RWPE1 (cell line): ENCODE measurements at regions of chr16 and their contacts with region 1.

Region 1: GRCh38 chr16:57648590-57649442 is 19.3 kb upstream of the ADGRG3 start:
- DNase-seq: peak; percentile 84
- H3K27ac ChIP-seq: peak overlapping the region; percentile 70
- CTCF ChIP-seq: peak; percentile 97

Region 2: GRCh38 chr16:57591086-57591869 is 57.5 kb before region 1 on chr16:
- CTCF ChIA-PET with region 1: interaction called, 12 read pairs
- POLR2A ChIA-PET with region 1: no interaction called
- DNase-seq: peak; percentile 92
- H3K27ac ChIP-seq: peak overlapping the region; percentile 80
- CTCF ChIP-seq: peak; percentile 73

Region 3: DNA sequence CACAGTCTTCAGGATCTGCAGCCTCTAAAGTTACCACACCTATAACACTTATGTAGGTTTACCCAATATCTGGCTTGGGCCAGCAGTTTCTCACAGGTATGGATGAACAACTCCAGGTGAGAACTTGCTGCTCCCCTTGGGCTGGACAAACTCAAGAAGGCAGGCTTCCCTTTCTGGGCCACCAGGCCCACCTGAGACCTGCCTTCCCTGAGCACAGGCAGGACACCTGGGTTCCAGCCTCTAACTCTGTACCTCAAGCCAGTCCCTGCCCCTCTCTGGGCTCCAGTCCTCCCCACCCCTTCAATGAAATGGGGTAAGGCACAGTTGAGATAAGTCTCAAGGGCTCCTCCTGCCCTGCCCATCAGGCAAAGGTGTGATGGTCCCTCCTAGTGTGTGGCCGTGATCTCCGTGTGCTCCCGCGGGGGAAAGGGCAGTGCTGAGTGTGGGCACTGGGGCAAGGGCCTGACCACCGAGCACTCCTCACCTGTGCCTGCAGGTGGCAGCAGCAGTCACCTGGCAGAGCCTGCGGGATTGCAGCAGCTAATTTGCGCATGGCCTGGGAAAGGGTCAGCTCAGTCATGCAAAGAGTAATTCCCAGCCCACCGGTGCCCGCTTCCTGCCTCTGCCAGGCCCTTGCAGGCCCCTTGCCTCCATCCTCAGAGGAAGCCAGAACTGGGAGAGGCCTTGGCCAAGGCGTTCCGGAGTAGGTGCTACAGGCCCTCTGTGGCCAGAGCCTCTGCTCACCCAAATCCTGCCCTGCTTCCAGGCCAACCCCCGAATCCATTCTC is 48.6 kb before region 1 on chr16:
- CTCF ChIA-PET with region 1: interaction called, 22 read pairs
- POLR2A ChIA-PET with region 1: no interaction called
- DNase-seq: peak; percentile 62
- H3K27ac ChIP-seq: no peak overlapping the region
- CTCF ChIP-seq: peak; percentile 90

Region 4: GRCh38 chr16:57637424-57637823 is 11.4 kb before region 1 on chr16:
- CTCF ChIA-PET with region 1: interaction called, 10 read pairs
- POLR2A ChIA-PET with region 1: no interaction called
- DNase-seq: no peak
- H3K27ac ChIP-seq: peak overlapping the region; percentile 17; the same call in 1 of the 2 replicates
- CTCF ChIP-seq: no peak